OCI-LY7 (cell line): ENCODE measurements at regions of chr12 and their contacts with region 1.

Region 1: GRCh38 chr12:2812290-2813213 is at the start of gene ITFG2:
- DNase-seq: peak; percentile 99
- H3K4me3 ChIP-seq: peak within 1 kb of the TSS; percentile 84
- H3K27ac ChIP-seq: peak within 1 kb of the TSS; percentile 73
- H3K4me1 ChIP-seq: peaks cover 16% of the 10 kb centered on the region
- CTCF ChIP-seq: no peak
- total RNA-seq, gene ITFG2: 37.4 and 55.2 TPM in 2 replicates

Region 2: DNA sequence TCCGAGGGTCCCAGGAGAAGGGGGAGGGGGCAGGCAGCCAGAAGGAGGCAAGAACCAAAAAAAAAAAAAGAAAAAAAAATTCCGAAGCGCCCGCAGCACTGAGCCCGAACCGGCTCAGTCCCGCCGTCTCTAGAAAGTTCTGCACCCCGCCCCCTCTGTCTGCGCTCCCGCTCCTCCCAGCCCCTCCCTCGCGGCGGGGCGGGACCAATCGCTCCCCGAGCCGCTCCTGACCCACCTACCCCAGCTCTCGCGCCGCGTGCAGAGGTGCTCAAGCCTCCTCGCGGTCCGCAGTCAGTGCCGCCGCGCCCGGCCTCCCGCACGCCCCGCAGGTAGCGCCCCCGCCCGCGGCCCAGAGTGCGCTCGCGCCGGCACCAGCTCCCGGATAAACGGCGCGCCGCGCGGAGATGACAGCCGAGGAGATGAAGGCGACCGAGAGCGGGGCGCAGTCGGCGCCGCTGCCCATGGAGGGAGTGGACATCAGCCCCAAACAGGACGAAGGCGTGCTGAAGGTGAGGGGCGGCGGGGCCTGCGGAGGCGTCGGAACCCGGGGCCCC is 17.7 kb before region 1 on chr12 and contains the start of gene FKBP4:
- CTCF ChIA-PET with region 1: no interaction called
- POLR2A ChIA-PET with region 1: no interaction called
- intact Hi-C with region 1: loop called (anchors 1 kb)
- DNase-seq: peak; percentile 89
- H3K4me3 ChIP-seq: peak within 1 kb of the TSS; percentile 98
- H3K27ac ChIP-seq: no peak within 1 kb of the TSS
- H3K4me1 ChIP-seq: peaks cover 21% of the 10 kb centered on the region
- CTCF ChIP-seq: no peak
- total RNA-seq, gene FKBP4: 70.3 and 86.7 TPM in 2 replicates

Region 3: DNA sequence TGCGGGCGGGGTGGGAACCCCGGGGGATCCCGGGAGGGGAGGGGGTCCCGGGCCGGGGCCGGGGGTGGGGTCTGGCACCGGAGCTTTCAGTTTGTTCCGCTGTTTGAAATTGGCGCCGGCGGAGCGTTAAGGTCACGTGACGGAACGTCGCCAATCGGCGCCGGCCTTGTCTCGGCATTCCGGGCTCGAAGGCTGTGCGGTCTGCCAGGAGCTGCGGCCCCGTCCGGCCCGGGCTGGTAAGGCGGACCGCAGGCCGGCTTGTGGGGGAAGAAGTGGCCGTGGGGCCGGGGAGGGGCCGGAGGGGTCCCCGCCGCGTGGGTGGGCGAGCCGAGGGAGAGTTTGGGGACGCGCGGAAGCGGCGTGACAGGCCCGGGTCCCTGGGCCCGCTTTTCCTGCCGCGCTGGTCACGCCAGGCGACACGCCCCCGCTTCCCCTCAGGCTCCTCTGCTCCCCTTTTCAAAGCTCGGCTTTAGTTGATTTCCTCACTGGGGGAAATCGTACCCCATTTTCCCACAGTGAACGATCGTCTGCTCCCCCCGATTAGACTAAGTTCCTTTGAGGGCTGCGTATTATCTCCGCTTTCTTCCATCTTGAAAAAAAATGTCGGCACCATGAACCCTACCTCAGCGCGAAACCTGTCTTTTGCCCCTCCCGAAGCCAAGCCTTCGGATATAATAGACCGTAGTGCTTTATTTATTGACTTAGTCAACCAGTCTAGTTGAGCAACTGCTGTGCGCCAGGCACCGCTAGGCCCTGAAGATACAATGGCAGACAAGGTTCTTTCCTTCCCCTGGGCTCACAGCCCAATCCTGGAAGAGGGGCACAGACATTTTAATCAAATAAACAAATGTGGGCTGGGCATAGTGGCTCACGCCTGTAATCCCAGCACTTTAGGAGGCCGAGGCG is 64.7 kb after region 1 on chr12 and contains the starts of genes FOXM1 and RHNO1:
- CTCF ChIA-PET with region 1: no interaction called
- POLR2A ChIA-PET with region 1: no interaction called
- intact Hi-C with region 1: loop called (anchors 2 kb)
- DNase-seq: peak; percentile 90
- H3K4me3 ChIP-seq: peak within 1 kb of the TSS; percentile 76
- H3K27ac ChIP-seq: peak within 1 kb of the TSS; percentile 76
- H3K4me1 ChIP-seq: peaks cover 29% of the 10 kb centered on the region
- CTCF ChIP-seq: no peak
- total RNA-seq, gene FOXM1: 91.7 and 109 TPM in 2 replicates
- total RNA-seq, gene RHNO1: 35.4 and 48.3 TPM in 2 replicates

Region 4: GRCh38 chr12:2930865-2931264 is 118.3 kb after region 1 on chr12:
- CTCF ChIA-PET with region 1: no interaction called
- POLR2A ChIA-PET with region 1: no interaction called
- intact Hi-C with region 1: no loop called
- DNase-seq: no peak
- H3K4me3 ChIP-seq: no peak overlapping the region
- H3K27ac ChIP-seq: no peak overlapping the region
- H3K4me1 ChIP-seq: no peaks in the 10 kb centered on the region
- CTCF ChIP-seq: no peak